GM13977 (cell line): ENCODE measurements at regions of chr17 and their contacts with region 1.

Region 1: GRCh38 chr17:77054936-77055335 is 85.8 kb upstream of the SEC14L1 start:
- DNase-seq: no peak
- CTCF ChIP-seq: no peak

Region 2: GRCh38 chr17:76868176-76868668 is 186.7 kb before region 1 on chr17 and contains the start of gene MGAT5B:
- in situ Hi-C with region 1: loop called (anchors 10 kb)
- DNase-seq: peak; percentile 97
- CTCF ChIP-seq: peak; percentile 100

Region 3: DNA sequence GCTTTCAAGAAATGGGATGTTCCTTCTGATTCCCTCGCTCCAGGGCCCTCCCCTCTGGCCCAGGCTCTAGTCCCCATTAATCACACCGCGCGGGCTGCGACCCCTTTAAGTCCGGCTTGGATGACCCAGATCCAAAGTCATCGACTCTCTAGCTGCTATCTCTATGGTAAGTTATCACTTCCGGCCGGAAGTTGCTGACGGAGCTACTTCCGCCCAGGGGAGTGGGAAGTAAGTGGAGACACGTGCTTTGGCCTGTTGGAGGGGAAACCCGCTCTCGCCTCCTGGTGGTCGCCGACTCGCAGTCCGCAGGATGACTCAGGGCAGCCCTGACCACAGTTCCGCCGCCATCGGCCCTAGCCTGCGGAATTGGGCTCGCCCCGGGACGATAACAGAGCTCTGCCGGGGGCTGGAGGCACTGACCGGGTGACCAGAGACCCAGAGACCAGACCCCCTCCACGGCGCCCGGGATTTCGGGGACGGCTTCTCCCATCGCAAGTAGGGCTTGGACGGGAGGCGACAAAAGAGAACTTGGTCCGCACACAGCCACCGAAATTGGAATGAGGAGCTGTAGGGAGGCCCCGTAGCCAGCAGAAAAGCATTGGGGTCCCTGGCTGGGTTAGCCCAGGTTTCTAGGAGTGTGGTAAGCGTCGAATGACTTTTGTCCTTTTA is 33.7 kb after region 1 on chr17:
- in situ Hi-C with region 1: no loop called
- DNase-seq: peak; percentile 86
- CTCF ChIP-seq: peak; percentile 59